Thyroid gland (tissue), 4 donors: ENCODE measurements at regions of chr2 and their contacts with region 1.

Region 1: GRCh38 chr2:52518678-52519077 is 1248.9 kb upstream of the CHAC2 start:
- DNase-seq: no peak
- H3K4me3 ChIP-seq: no peak overlapping the region
- H3K27ac ChIP-seq: no peak overlapping the region
- H3K4me1 ChIP-seq: no peaks in the 10 kb centered on the region
- H3K27me3 ChIP-seq: no peaks in the 10 kb centered on the region
- CTCF ChIP-seq: no peak
- POLR2A ChIP-seq: no peak

Region 2: DNA sequence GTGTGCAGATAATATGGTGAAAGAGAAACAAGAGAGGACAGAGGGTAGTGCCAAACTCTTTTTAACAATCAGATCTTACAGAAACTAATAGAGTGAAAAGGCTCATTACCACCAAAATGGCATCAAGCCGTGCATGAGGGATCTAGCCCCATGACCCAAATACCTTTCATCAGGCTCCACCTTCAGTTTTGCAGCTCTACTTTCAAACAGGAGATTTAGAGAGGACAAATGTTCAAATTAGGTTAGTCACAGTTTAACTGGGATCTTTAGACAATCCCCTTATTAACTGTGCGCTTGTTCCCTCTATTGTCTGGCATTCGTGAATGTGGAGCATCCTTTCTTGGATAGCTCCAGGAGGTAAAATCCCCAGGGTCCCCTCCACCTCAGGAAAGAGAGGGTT is 39.6 kb after region 1 on chr2:
- intact Hi-C with region 1: loop called (anchors 2 kb)
- DNase-seq: no peak
- H3K4me3 ChIP-seq: no peak overlapping the region
- H3K27ac ChIP-seq: no peak overlapping the region
- H3K4me1 ChIP-seq: no peaks in the 10 kb centered on the region
- H3K27me3 ChIP-seq: no peaks in the 10 kb centered on the region
- CTCF ChIP-seq: no peak
- POLR2A ChIP-seq: no peak